ENCODE measurements at regions of chr20 and their contacts with region 1.

Region 1: GRCh38 chr20:44717986-44718385 is 2.8 kb downstream of the CCN5 start:
- DNase-seq: no peak
- H3K4me3 ChIP-seq: no peak overlapping the region
- H3K27ac ChIP-seq: no peak overlapping the region
- H3K27me3 ChIP-seq: peaks cover 2% of the 10 kb centered on the region
- CTCF ChIP-seq: peak; percentile 36

Region 2: GRCh38 chr20:44733341-44734069 is 15.5 kb after region 1 on chr20:
- CTCF ChIA-PET with region 1: interaction called, 10 read pairs
- POLR2A ChIA-PET with region 1: interaction called, 3 read pairs
- DNase-seq: no peak
- H3K4me3 ChIP-seq: no peak overlapping the region
- H3K27ac ChIP-seq: no peak overlapping the region
- H3K27me3 ChIP-seq: no peaks in the 10 kb centered on the region
- CTCF ChIP-seq: peak; percentile 97

Measured in AG04450 (cell line).